ENCODE measurements at regions of chr6 and their contacts with region 1.

Region 1: DNA sequence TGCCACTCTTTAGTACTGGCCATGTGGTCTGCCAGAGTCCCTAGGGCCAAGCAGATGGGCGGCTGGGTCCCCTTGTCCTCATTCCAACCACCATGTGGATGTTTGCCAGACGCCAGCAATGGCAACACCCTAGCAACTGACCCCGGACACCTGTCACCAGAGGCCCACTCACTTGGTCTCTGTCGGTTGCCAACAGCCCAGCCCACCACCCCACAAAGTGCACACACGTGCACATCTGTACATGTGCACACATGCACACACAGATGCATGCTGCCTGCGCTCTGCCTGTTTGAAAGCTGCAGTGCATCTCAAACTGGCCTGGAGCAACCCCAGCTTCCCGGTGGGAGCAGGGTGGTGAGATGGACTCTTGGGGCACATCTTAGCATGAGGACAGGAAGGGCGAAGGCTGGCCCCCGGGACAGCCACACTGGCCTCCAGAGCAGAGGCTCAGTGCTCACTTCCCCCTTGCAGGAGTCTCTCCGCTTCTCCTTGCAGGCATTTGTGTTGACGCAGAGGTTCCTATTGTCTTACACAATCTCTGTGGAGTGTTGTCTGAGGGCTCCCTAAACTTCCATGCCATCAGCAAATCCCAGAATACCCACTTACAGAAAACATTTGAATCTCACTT is 54.0 kb downstream of the PSMG4 start:
- DNase-seq: no peak
- H3K4me3 ChIP-seq: no peak overlapping the region
- H3K27ac ChIP-seq: no peak overlapping the region
- H3K4me1 ChIP-seq: peaks cover 0 to 5% (median 2%) of the 10 kb centered on the region in 4 experiments; a peak in 3 of 7 replicates
- H3K27me3 ChIP-seq: no peaks in the 10 kb centered on the region
- CTCF ChIP-seq: no peak
- EP300 ChIP-seq: no peak
- POLR2A ChIP-seq: no peak
- RAD21 ChIP-seq: no peak

Region 2: DNA sequence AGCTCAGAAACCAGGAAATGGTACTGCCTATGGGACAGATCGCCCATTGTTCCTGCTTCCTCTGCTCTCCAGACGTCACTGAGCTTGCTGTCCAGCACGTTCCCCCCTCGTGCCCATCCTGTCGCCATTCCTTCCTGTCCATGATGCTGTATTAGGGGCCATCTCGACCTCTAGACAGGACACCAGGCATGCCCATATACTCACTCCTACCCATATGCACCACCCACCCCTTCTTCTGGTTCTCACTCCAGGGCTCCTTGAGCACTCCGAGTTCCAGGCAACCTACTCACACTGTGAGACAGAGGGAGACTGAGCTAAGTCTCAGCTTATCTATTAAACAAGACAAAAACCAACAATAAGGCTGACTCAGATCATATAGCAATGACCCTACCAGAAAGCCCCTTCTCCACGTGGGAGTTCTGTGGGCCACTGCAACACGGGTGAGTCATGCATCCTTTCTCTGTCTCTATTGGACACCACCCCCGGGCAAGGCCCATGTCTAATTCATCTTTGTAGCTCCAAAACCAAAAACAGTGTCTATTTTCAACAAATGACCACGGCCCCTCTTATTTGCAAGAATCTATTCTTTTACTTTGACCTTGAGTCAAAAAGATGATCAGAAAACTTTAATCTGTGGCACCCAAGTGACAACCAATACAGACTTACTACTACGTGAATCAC is 11.7 kb after region 1 on chr6:
- CTCF ChIA-PET with region 1: interaction called, 10 read pairs
- POLR2A ChIA-PET with region 1: interaction called, 5 read pairs
- DNase-seq: no peak
- H3K4me3 ChIP-seq: no peak overlapping the region
- H3K27ac ChIP-seq: no peak overlapping the region
- H3K4me1 ChIP-seq: peaks cover 0 to 5% (median 2%) of the 10 kb centered on the region in 4 experiments; a peak in 1 of 7 replicates
- H3K27me3 ChIP-seq: no peaks in the 10 kb centered on the region
- CTCF ChIP-seq: no peak
- EP300 ChIP-seq: no peak
- POLR2A ChIP-seq: no peak
- RAD21 ChIP-seq: no peak